ENCODE measurements at regions of chr18 and their contacts with region 1.

Region 1: DNA sequence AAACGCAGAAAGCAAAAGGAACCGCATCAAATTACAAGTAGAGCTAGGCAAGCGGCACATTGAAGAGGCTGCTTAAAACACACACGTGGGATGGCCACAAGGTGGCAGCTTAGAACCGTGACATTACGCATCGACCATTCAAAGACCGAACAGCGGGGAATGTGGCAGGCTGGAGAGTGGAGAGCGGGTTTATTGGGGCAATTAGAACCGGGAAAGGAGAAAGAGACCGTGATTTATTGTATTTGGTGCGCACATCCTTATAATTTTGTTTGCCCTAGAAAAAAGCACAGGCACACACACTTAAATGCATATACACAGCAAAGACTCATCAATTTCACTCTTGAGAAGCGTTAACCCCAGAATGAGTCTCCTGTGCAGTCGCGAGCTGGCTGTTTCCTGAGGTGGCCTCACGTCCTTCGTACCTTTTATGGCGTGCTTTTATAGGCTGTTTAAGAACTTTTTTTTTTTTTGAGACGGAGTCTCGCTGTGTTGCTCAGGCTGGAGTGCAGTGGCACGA is 31.7 kb upstream of the MEP1B start:
- DNase-seq: peak; percentile 71 to 84
- ATAC-seq: peak; percentile 95 to 100 (median 98)
- H3K4me3 ChIP-seq: peak overlapping the region; percentile 46
- H3K27ac ChIP-seq: no peak overlapping the region
- H3K4me1 ChIP-seq: peaks cover 6% of the 10 kb centered on the region
- H3K27me3 ChIP-seq: no peaks in the 10 kb centered on the region
- CTCF ChIP-seq: peak; percentile 83

Region 2: DNA sequence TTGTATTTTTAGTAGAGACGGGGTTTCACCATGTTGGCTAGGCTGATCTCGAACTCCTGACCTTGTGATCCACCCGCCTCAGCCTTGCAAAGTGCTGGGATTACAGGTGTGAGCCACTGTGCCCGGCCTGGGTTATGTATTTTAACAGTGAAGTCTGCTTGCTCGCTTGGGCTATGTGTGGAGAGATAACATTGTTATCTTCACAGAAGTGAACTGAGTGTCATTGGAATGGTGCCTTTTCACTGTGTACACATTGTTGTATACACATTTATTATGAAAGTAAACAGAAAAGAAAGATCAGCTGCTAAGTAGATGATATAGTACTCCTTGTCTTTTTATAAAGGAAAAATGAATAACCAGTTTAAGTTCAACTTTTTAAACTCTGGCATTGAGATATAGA is 36.1 kb before region 1 on chr18:
- intact Hi-C with region 1: no loop called
- DNase-seq: no peak
- ATAC-seq: no peak
- H3K4me3 ChIP-seq: no peak overlapping the region
- H3K27ac ChIP-seq: no peak overlapping the region
- H3K4me1 ChIP-seq: no peaks in the 10 kb centered on the region
- H3K27me3 ChIP-seq: no peaks in the 10 kb centered on the region
- CTCF ChIP-seq: no peak

Region 3: GRCh38 chr18:32271672-32272208 is 113.6 kb after region 1 on chr18:
- intact Hi-C with region 1: loop called in 1 of 2 experiments (anchors 5 kb)
- DNase-seq: no peak
- ATAC-seq: peak; percentile 67 to 87 (median 70)
- H3K4me3 ChIP-seq: no peak overlapping the region
- H3K27ac ChIP-seq: no peak overlapping the region
- H3K4me1 ChIP-seq: no peaks in the 10 kb centered on the region
- H3K27me3 ChIP-seq: no peaks in the 10 kb centered on the region
- CTCF ChIP-seq: peak; percentile 72

Measured in psoas muscle (tissue), 8 donors.